Left ventricle myocardium inferior (tissue), 1 donor: ENCODE measurements at regions of chr17 and their contacts with region 1.

Region 1: GRCh38 chr17:49616601-49617131 is 41.0 kb downstream of the NXPH3 start:
- DNase-seq: peak; percentile 75
- H3K4me3 ChIP-seq: peak overlapping the region; percentile 4
- H3K27ac ChIP-seq: peak overlapping the region; percentile 70
- H3K4me1 ChIP-seq: peaks cover 80% of the 10 kb centered on the region
- H3K27me3 ChIP-seq: no peaks in the 10 kb centered on the region
- CTCF ChIP-seq: no peak

Region 2: DNA sequence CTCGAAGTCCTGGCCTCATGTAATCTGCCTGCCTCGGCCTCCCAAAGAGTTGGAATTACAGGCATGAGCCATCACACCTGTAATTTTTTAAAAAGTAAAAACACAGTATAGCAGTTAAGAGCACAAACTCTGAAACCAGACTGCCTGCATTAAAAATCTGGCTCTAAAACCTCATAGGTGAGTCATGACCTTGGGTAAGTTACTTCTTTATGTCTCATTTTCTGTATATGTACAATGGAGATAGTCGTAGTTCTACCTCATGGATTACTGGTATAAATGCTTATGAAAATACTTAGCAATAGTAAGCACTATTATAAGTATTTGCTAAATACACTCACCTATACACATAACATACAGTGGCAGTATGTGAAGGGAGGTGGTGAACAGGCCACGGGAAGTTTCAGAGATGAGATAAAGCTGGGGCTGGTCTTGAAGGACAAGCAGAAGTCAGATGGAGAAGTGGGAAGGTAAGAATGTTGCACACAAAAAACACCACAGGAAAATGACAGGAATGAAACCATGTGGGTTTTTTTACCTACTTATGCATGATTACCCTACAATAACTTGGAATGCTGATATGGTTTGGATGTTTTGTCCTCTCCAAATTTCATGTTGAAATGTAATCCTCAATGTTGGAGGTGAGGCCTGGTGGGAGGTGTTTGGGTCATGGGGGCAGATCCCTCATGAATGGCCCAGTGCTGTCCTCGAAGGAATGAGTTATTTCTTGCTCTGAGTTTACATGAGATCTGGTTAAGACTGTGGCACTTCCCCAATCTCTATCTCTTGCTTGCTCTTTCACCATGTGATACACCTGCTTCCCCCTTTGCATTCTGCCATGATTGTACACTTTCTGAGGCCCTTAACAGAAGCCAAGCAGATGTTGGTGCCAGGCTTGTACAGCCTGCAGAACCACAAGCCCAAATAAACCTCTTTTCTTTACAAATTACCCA is 288.6 kb before region 1 on chr17:
- intact Hi-C with region 1: no loop called
- DNase-seq: no peak
- H3K4me3 ChIP-seq: no peak overlapping the region
- H3K27ac ChIP-seq: no peak overlapping the region
- H3K4me1 ChIP-seq: peaks cover 7% of the 10 kb centered on the region
- H3K27me3 ChIP-seq: no peaks in the 10 kb centered on the region
- CTCF ChIP-seq: no peak

Region 3: GRCh38 chr17:49677933-49678847 is 61.5 kb after region 1 on chr17 and contains the start of gene SPOP:
- intact Hi-C with region 1: loop called (anchors 10 kb)
- DNase-seq: peak; percentile 99
- H3K4me3 ChIP-seq: peak within 1 kb of the TSS; percentile 78
- H3K27ac ChIP-seq: peak within 1 kb of the TSS; percentile 96
- H3K4me1 ChIP-seq: peaks cover 46% of the 10 kb centered on the region
- H3K27me3 ChIP-seq: no peaks in the 10 kb centered on the region
- CTCF ChIP-seq: no peak
- total RNA-seq, gene SPOP: 66.9 TPM

Region 4: GRCh38 chr17:49723423-49723822 is 106.8 kb after region 1 on chr17:
- intact Hi-C with region 1: no loop called
- DNase-seq: peak; percentile 83
- H3K4me3 ChIP-seq: no peak overlapping the region
- H3K27ac ChIP-seq: peak overlapping the region; percentile 84
- H3K4me1 ChIP-seq: peaks cover 66% of the 10 kb centered on the region
- H3K27me3 ChIP-seq: no peaks in the 10 kb centered on the region
- CTCF ChIP-seq: no peak